IMR-90 (cell line): ENCODE measurements at regions of chr7 and their contacts with region 1.

Region 1: DNA sequence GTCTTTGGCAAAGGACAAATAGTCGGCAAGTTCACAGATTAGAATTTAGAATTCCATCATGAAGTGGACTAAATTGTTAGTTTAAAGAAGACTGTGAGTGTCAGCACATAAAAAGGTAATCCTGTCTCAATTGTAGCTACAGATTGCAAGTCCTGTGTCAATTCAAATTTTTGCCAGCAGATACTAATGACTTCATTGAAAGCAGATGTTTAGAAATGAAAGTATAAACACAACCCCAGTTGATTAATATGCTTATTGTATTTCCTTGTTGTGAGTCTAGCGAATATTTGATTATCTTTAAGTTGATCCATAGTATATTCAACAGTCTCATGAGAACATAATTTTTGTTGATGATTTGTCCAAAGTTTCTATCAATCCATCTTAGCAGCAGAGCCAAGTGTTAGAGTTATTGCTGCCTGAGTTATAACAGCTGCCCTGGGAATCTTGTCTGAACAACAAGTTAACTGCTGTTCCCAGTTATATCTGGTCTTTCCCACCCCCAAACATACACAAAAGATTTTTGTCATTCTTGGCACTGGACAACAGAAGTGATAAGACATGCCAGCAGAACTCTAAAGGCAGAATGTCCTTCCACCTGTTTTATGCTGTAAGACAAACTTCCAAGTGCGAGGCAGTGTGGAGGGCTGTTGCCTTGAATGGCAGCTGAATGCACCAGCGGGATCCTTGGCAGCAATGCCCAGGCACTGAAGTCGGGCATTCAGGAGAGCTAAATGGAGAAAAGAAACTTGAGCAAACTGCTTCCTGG is 21.3 kb upstream of the HERPUD2 start:
- DNase-seq: peak; percentile 54
- ATAC-seq: peak; percentile 74
- H3K4me3 ChIP-seq: no peak overlapping the region
- H3K27ac ChIP-seq: peak overlapping the region; percentile 15; the same call in 1 of the 2 replicates
- H3K4me1 ChIP-seq: peaks cover 4% of the 10 kb centered on the region; the same call in 1 of the 2 replicates
- H3K27me3 ChIP-seq: no peaks in the 10 kb centered on the region; the same call in 1 of the 2 replicates
- CTCF ChIP-seq: no peak
- POLR2A ChIP-seq: no peak
- RAD21 ChIP-seq: no peak

Region 2: GRCh38 chr7:35565927-35566326 is 150.3 kb before region 1 on chr7:
- CTCF ChIA-PET with region 1: no interaction called
- POLR2A ChIA-PET with region 1: no interaction called
- dilution Hi-C with region 1: no loop called
- in situ Hi-C with region 1: no loop called
- intact Hi-C with region 1: no loop called
- DNase-seq: no peak
- ATAC-seq: no peak
- H3K4me3 ChIP-seq: no peak overlapping the region
- H3K27ac ChIP-seq: no peak overlapping the region
- H3K4me1 ChIP-seq: no peaks in the 10 kb centered on the region
- H3K27me3 ChIP-seq: peaks cover 20% of the 10 kb centered on the region
- CTCF ChIP-seq: no peak
- POLR2A ChIP-seq: no peak
- RAD21 ChIP-seq: no peak

Region 3: DNA sequence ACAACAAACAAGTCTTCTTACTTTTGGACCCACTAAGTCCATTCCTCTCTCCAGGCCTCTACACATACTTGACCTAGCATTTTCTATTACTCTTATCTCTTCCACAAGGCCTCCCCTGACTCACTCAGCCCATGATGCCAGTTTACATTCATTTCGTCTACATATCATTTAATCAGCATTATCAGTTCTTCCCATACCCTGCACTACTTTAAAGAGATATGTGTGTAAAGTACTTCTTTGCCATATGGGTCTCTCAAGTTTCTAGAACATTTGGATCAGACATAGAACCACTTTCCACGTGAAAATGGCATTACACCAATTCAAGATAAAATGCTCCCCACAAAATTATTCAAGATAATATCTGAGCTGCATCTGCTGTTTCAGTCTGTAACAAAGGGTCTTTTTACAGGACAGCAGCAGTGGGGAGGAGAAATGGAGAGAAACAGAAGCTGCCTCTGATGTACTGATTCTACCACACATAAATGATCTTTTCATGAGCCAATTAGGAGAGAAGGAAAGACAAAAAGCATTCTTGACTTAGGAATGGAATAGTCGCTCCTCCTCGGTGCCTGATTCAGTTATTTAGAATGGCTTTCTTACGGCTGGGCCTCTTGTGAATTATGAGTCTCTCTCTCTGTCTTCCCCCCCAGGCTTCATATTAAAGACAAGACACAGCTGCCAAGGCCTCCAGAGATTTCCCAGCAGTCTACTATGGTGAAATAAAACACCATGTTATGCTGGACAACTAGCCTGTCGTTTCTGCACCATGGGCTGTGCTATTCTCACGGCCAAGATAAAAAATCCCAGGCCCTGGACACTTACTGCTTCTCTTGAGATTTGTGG is 37.8 kb after region 1 on chr7:
- CTCF ChIA-PET with region 1: no interaction called
- POLR2A ChIA-PET with region 1: no interaction called
- dilution Hi-C with region 1: no loop called
- in situ Hi-C with region 1: no loop called
- intact Hi-C with region 1: loop called (anchors 2 kb)
- DNase-seq: peak; percentile 66
- ATAC-seq: peak; percentile 65
- H3K4me3 ChIP-seq: no peak overlapping the region
- H3K27ac ChIP-seq: peak overlapping the region; percentile 56; the same call in 1 of the 2 replicates
- H3K4me1 ChIP-seq: peaks cover 15% of the 10 kb centered on the region
- H3K27me3 ChIP-seq: no peaks in the 10 kb centered on the region
- CTCF ChIP-seq: no peak
- POLR2A ChIP-seq: no peak
- RAD21 ChIP-seq: no peak

Region 4: DNA sequence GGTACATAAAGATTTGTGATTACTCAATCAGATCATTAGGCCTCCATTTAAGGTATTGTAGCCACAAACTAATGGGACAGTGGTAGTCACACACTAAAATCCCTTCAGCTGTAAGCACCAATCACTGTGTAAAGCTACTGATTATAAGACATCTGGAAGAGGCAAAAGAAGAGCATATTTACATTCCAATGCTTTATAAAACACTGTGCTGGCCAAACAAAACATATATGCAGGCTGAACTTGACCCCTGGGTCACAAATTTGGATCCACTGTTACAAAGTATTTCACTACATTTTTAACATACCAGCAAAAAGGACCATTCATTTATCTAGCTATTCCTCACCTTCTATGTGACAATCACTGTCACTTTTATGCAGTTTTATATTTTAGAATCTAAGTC is 632.0 kb after region 1 on chr7:
- CTCF ChIA-PET with region 1: no interaction called
- POLR2A ChIA-PET with region 1: no interaction called
- dilution Hi-C with region 1: no loop called
- in situ Hi-C with region 1: loop called (anchors 25 kb)
- intact Hi-C with region 1: no loop called
- DNase-seq: peak; percentile 59
- ATAC-seq: peak; percentile 94
- H3K4me3 ChIP-seq: no peak overlapping the region
- H3K27ac ChIP-seq: no peak overlapping the region
- H3K4me1 ChIP-seq: peaks cover 2% of the 10 kb centered on the region; the same call in 1 of the 2 replicates
- H3K27me3 ChIP-seq: peaks cover 2% of the 10 kb centered on the region; the same call in 1 of the 2 replicates
- CTCF ChIP-seq: no peak
- POLR2A ChIP-seq: no peak
- RAD21 ChIP-seq: no peak